ENCODE measurements at regions of chr3 and their contacts with region 1.

Region 1: DNA sequence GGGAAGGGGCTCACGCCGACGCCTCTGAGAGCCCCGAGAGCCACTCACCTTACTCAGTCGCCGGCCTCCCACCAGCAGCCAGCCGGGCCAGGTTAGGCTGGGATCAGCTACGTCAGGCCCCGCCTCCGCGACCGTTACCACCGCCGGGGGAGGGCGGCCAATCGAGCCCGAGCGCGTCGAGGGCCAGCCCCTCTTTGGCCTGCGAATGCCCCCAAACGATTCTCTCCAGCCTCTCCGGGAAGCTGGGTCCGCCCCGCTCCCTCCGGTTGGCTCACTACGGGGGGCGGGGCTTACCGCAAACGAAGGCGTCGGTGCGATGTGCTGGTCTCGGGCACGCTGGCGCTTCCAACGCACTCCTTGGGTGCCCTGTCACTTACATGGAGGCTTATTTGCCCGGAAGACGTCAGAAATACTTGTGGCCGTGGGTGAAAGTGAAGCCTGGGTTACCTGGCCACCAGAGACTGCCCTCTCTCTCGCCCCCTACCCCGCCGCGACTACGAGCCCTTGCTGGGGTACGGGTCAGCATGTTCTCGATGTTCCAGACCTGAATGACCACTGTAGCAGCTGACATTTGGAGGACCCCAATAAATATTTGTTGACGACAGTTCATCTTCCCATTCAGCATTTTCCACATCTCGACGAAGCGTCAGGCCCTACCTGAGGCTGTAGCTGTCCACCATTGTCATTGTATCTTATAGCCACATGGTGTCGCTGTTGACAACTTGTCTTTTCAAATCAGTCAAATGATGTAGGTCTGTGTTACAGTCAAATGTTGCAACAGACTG is at the start of gene CEP70:
- DNase-seq: peak; percentile 98
- H3K4me3 ChIP-seq: peak within 1 kb of the TSS; percentile 55 to 78 (median 74)
- H3K27ac ChIP-seq: peak within 1 kb of the TSS; percentile 94
- H3K4me1 ChIP-seq: peaks cover 0 to 14% (median 10%) of the 10 kb centered on the region in 4 donors
- H3K27me3 ChIP-seq: no peaks in the 10 kb centered on the region
- CTCF ChIP-seq: peak; percentile 85 to 97 (median 90)
- EP300 ChIP-seq: peak in 1 of 4 donors; percentile 14
- POLR2A ChIP-seq: peak; percentile 90 to 92
- total RNA-seq, gene CEP70: 42.6 to 77.2 (median 66.8) TPM

Region 2: DNA sequence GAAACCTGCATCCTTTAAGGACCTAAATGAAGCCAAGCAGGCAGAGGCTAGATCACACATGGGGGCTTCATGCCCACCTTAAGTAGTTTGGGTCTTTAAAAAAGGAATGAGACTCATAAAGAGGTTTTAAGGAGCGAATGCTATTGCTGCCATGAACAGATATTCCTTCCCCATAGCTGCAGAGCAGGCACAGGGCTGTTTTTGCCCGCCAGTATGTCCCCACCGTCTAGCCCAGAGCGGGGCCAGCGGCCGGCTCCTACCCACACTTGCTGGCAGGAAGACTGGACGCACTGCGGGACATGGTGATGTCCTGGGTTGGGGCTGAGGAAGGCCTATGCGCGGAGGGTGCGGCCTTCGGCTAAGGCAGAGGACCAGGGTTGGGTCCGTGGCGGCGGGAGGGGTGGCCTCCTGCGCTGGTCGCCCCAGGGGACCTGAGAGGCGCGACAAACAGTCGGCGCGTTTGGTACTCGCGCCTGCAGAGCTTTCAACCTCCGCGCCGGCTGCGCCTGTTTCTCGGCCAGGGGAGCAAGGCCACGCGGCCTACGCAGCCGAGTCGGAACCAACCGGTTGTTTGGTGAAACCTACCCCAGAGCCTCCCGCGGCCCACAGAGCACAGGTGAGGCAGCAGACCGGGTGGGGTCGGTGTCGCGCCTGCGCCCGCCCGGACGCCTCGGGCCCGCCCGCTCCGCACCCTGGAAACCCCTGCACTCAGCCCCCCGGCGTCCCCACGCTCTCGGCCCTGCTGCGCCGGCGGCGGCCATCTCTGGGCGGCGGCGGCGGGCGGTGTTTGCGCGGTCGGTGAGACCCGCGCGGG is 14.2 kb after region 1 on chr3 and contains the start of gene FAIM:
- intact Hi-C with region 1: loop called (anchors 2 kb)
- DNase-seq: peak; percentile 85
- H3K4me3 ChIP-seq: peak within 1 kb of the TSS; percentile 47 to 91 (median 74)
- H3K27ac ChIP-seq: peak within 1 kb of the TSS; percentile 93 to 99 (median 96)
- H3K4me1 ChIP-seq: peaks cover 0 to 14% (median 12%) of the 10 kb centered on the region in 4 donors
- H3K27me3 ChIP-seq: no peaks in the 10 kb centered on the region
- CTCF ChIP-seq: no peak
- EP300 ChIP-seq: no peak
- POLR2A ChIP-seq: no peak
- total RNA-seq, gene FAIM: 6.6 to 15.3 (median 10.1) TPM

Region 3: GRCh38 chr3:138915503-138916498 is 321.5 kb after region 1 on chr3:
- intact Hi-C with region 1: loop called (anchors 1 kb)
- DNase-seq: peak; percentile 96
- H3K4me3 ChIP-seq: peak overlapping the region; percentile 63 to 82 (median 67)
- H3K27ac ChIP-seq: peak overlapping the region; percentile 89 to 96 (median 92)
- H3K4me1 ChIP-seq: peaks cover 0 to 15% (median 11%) of the 10 kb centered on the region in 4 donors
- H3K27me3 ChIP-seq: no peaks in the 10 kb centered on the region
- CTCF ChIP-seq: peak; percentile 84 to 92 (median 88)
- EP300 ChIP-seq: no peak
- POLR2A ChIP-seq: no peak

Region 4: DNA sequence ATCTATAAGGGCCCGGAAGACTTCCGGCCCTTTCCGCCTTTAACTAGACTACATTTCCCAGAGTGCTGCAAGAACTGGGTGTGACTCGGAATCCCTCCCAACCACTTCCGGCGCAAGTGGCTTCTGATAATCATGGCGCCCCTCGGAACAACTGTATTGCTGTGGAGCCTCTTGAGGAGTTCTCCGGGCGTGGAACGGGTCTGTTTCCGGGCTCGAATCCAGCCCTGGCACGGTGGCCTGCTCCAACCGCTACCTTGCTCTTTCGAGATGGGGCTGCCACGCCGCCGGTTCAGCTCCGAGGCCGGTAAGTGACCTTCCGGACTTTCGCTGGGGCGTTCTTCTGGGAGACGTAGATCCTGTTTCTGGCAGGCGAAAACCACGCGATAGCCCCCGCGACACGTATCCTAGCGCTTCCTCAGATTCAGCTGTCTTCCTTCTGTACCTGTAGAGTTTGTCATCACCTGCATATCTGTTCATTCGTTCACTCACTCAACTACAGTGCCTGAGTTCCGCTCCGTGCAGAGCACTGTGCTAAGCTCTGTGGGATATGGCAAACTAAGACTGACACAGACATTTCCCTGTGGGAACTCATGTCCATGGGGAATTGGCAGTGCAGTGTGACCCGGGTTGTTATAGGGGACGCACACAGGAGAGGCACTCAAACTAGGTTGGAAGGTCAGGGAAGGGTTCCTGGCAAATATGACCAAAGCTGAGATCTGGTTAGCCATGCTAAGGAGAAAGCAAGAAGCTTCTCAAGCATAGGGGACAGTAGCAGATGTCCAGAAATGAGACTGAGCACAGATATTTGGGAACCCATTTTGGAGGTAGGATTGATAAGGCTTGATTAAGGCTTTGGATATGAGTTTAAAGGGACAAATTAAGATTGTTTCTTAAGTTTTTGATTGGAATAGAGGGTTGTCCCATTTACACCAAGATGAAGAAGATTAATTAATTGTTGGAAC is 749.8 kb after region 1 on chr3 and contains the start of gene MRPS22:
- intact Hi-C with region 1: loop called (anchors 5 kb)
- DNase-seq: peak; percentile 87
- H3K4me3 ChIP-seq: peak within 1 kb of the TSS; percentile 76 to 93 (median 88)
- H3K27ac ChIP-seq: peak within 1 kb of the TSS; percentile 78 to 82 (median 82)
- H3K4me1 ChIP-seq: peaks cover 0 to 22% (median 18%) of the 10 kb centered on the region in 4 donors
- H3K27me3 ChIP-seq: no peaks in the 10 kb centered on the region
- CTCF ChIP-seq: no peak
- EP300 ChIP-seq: no peak
- POLR2A ChIP-seq: peak in 1 of 2 donors; percentile 21
- total RNA-seq, gene MRPS22: 39.2 to 60.7 (median 47.1) TPM